ENCODE measurements at regions of chr15 and their contacts with region 1.

Region 1: DNA sequence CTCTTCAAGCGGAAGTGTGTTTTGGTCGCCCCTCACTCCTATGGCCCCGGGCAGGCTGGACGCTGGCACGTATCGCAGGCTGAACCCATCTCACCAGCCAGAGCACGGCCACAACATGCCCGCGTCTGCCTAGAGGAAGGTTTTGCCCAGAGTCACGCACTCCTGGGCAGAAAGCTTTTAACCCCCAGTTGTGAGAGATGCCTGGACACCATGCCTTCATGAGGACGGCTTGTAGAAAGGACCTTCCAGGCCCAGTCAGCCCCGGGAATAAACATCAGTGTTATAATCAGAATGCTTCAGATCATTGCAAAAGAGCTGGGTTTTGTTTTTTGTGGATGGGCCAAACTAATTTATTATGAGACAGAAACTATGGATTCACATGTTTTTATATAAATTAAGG is 16.5 kb downstream of the CYFIP1 start:
- DNase-seq: no peak
- H3K4me3 ChIP-seq: no peak overlapping the region
- H3K27ac ChIP-seq: no peak overlapping the region
- H3K4me1 ChIP-seq: no peaks in the 10 kb centered on the region
- H3K27me3 ChIP-seq: no peaks in the 10 kb centered on the region
- CTCF ChIP-seq: no peak

Region 2: DNA sequence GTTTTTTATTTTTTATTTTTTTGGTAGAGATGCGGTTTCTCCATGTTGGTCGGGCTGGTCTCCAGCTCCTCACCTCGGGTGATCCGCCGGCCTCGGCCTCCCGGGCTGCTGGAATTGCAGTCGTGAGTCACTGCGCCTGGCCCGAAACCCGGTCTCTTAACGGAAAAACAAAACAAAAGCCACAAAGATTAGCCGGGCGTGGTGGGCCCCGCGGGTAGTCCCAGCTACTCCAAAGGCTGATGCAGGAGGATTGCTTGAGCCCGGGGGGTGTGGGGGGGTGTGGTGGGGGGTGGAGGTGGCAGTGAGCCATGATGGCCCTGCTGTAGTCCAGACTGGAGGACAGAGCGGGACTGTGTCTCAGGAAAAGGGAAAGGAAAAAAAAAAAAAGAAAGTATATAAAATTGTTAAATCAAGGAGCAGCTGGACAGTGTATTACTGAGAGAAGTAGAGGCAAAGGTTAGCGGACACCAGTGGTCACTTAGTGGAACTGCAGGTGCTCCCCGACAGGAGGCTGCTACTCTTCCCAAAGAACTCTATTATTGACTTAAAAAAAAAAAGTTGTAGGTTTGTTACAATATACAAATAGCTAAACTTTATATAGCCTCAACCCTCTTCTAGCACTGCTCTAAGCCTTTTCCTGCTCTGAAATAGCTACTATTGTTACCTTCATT is 106.0 kb after region 1 on chr15:
- CTCF ChIA-PET with region 1: no interaction called
- POLR2A ChIA-PET with region 1: interaction called, 15 read pairs
- intact Hi-C with region 1: no loop called
- DNase-seq: peak; percentile 19 to 46
- H3K4me3 ChIP-seq: no peak overlapping the region
- H3K27ac ChIP-seq: no peak overlapping the region
- H3K4me1 ChIP-seq: no peaks in the 10 kb centered on the region
- H3K27me3 ChIP-seq: peaks cover 35% of the 10 kb centered on the region
- CTCF ChIP-seq: peak; percentile 53

Region 3: GRCh38 chr15:23081271-23081670 is 117.6 kb after region 1 on chr15:
- CTCF ChIA-PET with region 1: no interaction called
- POLR2A ChIA-PET with region 1: no interaction called
- intact Hi-C with region 1: no loop called
- DNase-seq: no peak
- H3K4me3 ChIP-seq: no peak overlapping the region
- H3K27ac ChIP-seq: no peak overlapping the region
- H3K4me1 ChIP-seq: no peaks in the 10 kb centered on the region
- H3K27me3 ChIP-seq: peaks cover 53% of the 10 kb centered on the region
- CTCF ChIP-seq: no peak

Region 4: GRCh38 chr15:23750776-23751175 is 787.1 kb after region 1 on chr15:
- CTCF ChIA-PET with region 1: no interaction called
- POLR2A ChIA-PET with region 1: no interaction called
- intact Hi-C with region 1: no loop called
- DNase-seq: no peak
- H3K4me3 ChIP-seq: no peak overlapping the region
- H3K27ac ChIP-seq: no peak overlapping the region
- H3K4me1 ChIP-seq: no peaks in the 10 kb centered on the region
- H3K27me3 ChIP-seq: no peaks in the 10 kb centered on the region
- CTCF ChIP-seq: no peak

Measured in PC-9 (cell line).